ENCODE measurements at regions of chr9 and their contacts with region 1.

Region 1: GRCh38 chr9:5832543-5833529 is at the start of gene ERMP1:
- DNase-seq: peak; percentile 87
- H3K4me3 ChIP-seq: peak within 1 kb of the TSS; percentile 61 to 95 (median 61)
- H3K27ac ChIP-seq: no peak within 1 kb of the TSS
- H3K4me1 ChIP-seq: peaks cover 5% of the 10 kb centered on the region
- H3K27me3 ChIP-seq: no peaks in the 10 kb centered on the region
- CTCF ChIP-seq: peak; percentile 92 to 93
- POLR2A ChIP-seq: peak; percentile 49
- total RNA-seq, gene ERMP1: 16.6 and 20.1 TPM in 2 replicates

Region 2: GRCh38 chr9:5628530-5629311 is 204.1 kb before region 1 on chr9 and contains the start of gene RIC1:
- CTCF ChIA-PET with region 1: no interaction called
- POLR2A ChIA-PET with region 1: interaction called, 3 read pairs
- dilution Hi-C with region 1: no loop called
- intact Hi-C with region 1: loop called (anchors 1 kb)
- DNase-seq: peak; percentile 94
- H3K4me3 ChIP-seq: peak within 1 kb of the TSS; percentile 91 to 99 (median 93)
- H3K27ac ChIP-seq: peak within 1 kb of the TSS; percentile 85
- H3K4me1 ChIP-seq: peaks cover 32% of the 10 kb centered on the region
- H3K27me3 ChIP-seq: no peaks in the 10 kb centered on the region
- CTCF ChIP-seq: no peak
- POLR2A ChIP-seq: peak; percentile 98
- total RNA-seq, gene RIC1: 23.5 and 24.8 TPM in 2 replicates

Region 3: GRCh38 chr9:5743109-5743508 is 89.7 kb before region 1 on chr9:
- CTCF ChIA-PET with region 1: no interaction called
- POLR2A ChIA-PET with region 1: no interaction called
- dilution Hi-C with region 1: no loop called
- intact Hi-C with region 1: no loop called
- DNase-seq: no peak
- H3K4me3 ChIP-seq: no peak overlapping the region
- H3K27ac ChIP-seq: no peak overlapping the region
- H3K4me1 ChIP-seq: no peaks in the 10 kb centered on the region
- H3K27me3 ChIP-seq: no peaks in the 10 kb centered on the region
- CTCF ChIP-seq: no peak
- POLR2A ChIP-seq: no peak

Region 4: GRCh38 chr9:5817869-5818268 is 15.0 kb before region 1 on chr9:
- CTCF ChIA-PET with region 1: interaction called, 10 read pairs
- POLR2A ChIA-PET with region 1: no interaction called
- dilution Hi-C with region 1: no loop called
- intact Hi-C with region 1: no loop called
- DNase-seq: peak; percentile 21
- H3K4me3 ChIP-seq: no peak overlapping the region
- H3K27ac ChIP-seq: no peak overlapping the region
- H3K4me1 ChIP-seq: no peaks in the 10 kb centered on the region
- H3K27me3 ChIP-seq: no peaks in the 10 kb centered on the region
- CTCF ChIP-seq: no peak
- POLR2A ChIP-seq: no peak

Region 5: GRCh38 chr9:5843794-5844504 is 11.1 kb after region 1 on chr9:
- CTCF ChIA-PET with region 1: interaction called, 45 read pairs
- POLR2A ChIA-PET with region 1: interaction called, 3 read pairs
- dilution Hi-C with region 1: no loop called
- intact Hi-C with region 1: loop called (anchors 1 kb)
- DNase-seq: peak; percentile 61
- H3K4me3 ChIP-seq: peak overlapping the region in 1 of 3 experiments; percentile 26
- H3K27ac ChIP-seq: peak overlapping the region; percentile 83
- H3K4me1 ChIP-seq: peaks cover 39% of the 10 kb centered on the region
- H3K27me3 ChIP-seq: no peaks in the 10 kb centered on the region
- CTCF ChIP-seq: no peak
- POLR2A ChIP-seq: peak; percentile 60

Region 6: DNA sequence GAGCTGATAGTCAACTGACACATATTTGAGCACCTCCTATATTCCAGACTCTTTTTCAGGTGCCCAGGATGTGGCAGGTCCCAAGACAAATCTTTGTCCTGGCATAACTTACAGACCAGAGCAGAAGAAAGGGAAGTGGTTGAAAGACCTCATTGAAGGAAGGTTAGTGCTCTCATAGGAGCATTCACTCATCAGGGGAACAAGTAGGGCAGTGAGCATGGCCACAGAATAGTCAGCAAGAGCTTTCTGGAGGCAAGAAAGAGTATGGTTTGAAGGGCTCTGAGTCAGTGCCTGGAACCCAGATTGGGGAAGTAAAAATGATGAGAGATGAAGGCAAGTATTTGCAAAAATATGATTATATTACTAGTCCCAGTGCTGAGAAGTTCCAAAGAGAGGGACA is 25.1 kb after region 1 on chr9:
- CTCF ChIA-PET with region 1: interaction called, 12 read pairs
- POLR2A ChIA-PET with region 1: interaction called, 3 read pairs
- dilution Hi-C with region 1: no loop called
- intact Hi-C with region 1: loop called (anchors 2 kb)
- DNase-seq: no peak
- H3K4me3 ChIP-seq: no peak overlapping the region
- H3K27ac ChIP-seq: no peak overlapping the region
- H3K4me1 ChIP-seq: no peaks in the 10 kb centered on the region
- H3K27me3 ChIP-seq: peaks cover 3 to 9% of the 10 kb centered on the region in 2 experiments
- CTCF ChIP-seq: no peak
- POLR2A ChIP-seq: no peak

Region 7: GRCh38 chr9:5869315-5870019 is 36.6 kb after region 1 on chr9:
- CTCF ChIA-PET with region 1: interaction called, 5 read pairs
- POLR2A ChIA-PET with region 1: no interaction called
- dilution Hi-C with region 1: no loop called
- intact Hi-C with region 1: loop called (anchors 5 kb)
- DNase-seq: no peak
- H3K4me3 ChIP-seq: no peak overlapping the region
- H3K27ac ChIP-seq: no peak overlapping the region
- H3K4me1 ChIP-seq: no peaks in the 10 kb centered on the region
- H3K27me3 ChIP-seq: no peaks in the 10 kb centered on the region
- CTCF ChIP-seq: peak in 1 of 2 donors; percentile 13
- POLR2A ChIP-seq: no peak

Region 8: DNA sequence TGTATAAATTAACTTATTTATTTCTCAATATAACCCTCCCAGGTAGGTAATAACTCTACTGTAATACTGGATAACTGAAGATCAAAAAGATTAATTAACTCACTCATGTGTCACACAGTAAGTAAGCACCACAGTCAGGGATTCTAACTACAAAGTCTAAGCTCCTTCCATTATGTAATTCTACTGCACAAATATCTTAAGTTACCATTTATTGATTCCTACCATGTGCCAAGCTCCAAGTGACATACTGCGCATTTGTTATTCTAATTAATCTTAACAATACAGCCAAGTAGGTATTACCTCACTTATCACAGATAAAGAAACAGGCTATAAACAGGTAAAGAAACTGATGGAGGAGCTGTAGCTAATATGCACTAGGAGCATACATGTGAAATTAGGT is 124.3 kb after region 1 on chr9:
- CTCF ChIA-PET with region 1: interaction called, 4 read pairs
- POLR2A ChIA-PET with region 1: interaction called, 10 read pairs
- dilution Hi-C with region 1: no loop called
- intact Hi-C with region 1: no loop called
- DNase-seq: no peak
- H3K4me3 ChIP-seq: no peak overlapping the region
- H3K27ac ChIP-seq: no peak overlapping the region
- H3K4me1 ChIP-seq: no peaks in the 10 kb centered on the region
- H3K27me3 ChIP-seq: no peaks in the 10 kb centered on the region
- CTCF ChIP-seq: no peak
- POLR2A ChIP-seq: no peak

Measured in endothelial cell of umbilical vein (primary cell).